ENCODE measurements at regions of chr6 and their contacts with region 1.

Region 1: DNA sequence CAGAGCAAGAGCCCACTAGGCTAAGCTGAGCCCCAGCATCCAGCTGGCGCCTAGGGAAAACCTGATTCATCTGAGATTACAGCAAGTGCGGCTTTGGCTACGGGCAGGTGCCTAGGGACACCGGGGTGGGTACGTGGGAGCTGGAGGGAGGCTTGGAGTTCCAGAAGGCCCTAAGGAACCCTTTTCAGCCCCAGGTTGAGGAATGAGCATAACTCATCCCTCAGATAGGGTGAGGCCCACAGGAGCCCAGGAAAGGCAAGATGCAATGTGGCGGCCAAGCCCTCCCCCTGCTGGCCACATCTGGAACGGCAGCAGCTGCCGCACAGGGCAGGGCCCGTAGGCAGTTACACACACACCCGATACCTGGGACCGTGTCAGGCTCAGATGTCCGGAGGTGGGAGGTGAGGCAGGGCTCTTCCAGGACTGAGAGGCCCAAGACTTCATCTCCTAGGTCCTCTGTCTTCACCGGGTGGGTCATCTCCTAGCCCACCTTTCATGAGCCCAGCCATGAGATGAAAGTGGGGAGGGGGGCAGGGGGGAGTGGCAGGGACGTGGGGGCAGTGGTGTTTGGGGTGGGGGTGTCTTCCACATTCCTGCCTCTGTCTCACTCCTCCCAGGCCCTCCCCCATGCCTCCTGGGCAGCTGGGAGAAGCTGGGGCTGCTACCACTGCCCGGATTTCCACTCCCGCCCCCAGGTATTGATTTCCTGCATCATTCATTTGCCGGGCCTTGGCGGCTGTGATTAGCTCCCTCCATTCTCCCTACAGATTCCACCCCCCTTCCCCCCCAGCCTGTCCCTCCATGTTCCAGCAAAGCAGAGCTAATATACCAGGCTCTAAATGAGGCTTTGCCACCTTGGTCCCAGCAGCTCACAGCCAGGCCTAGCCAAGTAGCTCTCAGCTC is 5.5 kb downstream of the MDGA1 start:
- DNase-seq: peak; percentile 90
- H3K4me3 ChIP-seq: no peak overlapping the region; a peak in 1 of 4 replicates
- H3K27ac ChIP-seq: peak overlapping the region in 1 of 2 experiments; percentile 20; a peak in 1 of 4 replicates
- H3K4me1 ChIP-seq: peaks cover 4 to 25% of the 10 kb centered on the region in 2 experiments; a peak in 3 of 4 replicates
- H3K27me3 ChIP-seq: no peaks in the 10 kb centered on the region
- CTCF ChIP-seq: peak; percentile 96
- EP300 ChIP-seq: no peak
- RAD21 ChIP-seq: peak; percentile 99

Region 2: DNA sequence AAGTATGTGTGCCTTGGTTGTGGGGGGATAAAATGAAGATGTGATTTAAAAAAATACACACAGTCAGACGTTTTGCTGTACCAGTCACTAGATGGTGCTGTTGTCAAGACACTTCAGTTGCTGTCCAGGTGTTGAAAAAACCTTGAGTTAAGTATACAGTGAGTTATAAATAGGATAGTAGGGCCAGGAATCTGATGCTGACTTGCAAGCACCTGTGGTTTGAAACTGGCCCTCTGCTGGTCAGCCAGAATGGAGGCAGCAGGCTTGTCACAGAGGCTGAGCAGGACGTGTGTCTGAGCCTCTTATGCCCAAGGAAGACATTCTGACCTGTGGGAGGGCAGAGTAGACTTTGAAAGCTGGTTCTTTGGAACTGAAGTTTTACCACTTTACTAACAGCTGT is 310.6 kb before region 1 on chr6:
- CTCF ChIA-PET with region 1: interaction called, 17 read pairs
- POLR2A ChIA-PET with region 1: no interaction called
- DNase-seq: peak; percentile 47
- H3K4me3 ChIP-seq: no peak overlapping the region; a peak in 1 of 4 replicates
- H3K27ac ChIP-seq: no peak overlapping the region
- H3K4me1 ChIP-seq: no peaks in the 10 kb centered on the region
- H3K27me3 ChIP-seq: no peaks in the 10 kb centered on the region
- CTCF ChIP-seq: peak; percentile 65
- EP300 ChIP-seq: no peak
- RAD21 ChIP-seq: peak; percentile 79

Region 3: GRCh38 chr6:37483917-37484785 is 208.0 kb before region 1 on chr6:
- CTCF ChIA-PET with region 1: interaction called, 88 read pairs
- POLR2A ChIA-PET with region 1: no interaction called
- DNase-seq: peak; percentile 92
- H3K4me3 ChIP-seq: no peak overlapping the region; a peak in 1 of 4 replicates
- H3K27ac ChIP-seq: peak overlapping the region in 1 of 2 experiments; percentile 43; a peak in 2 of 4 replicates
- H3K4me1 ChIP-seq: peaks cover 0 to 29% of the 10 kb centered on the region in 2 experiments; a peak in 1 of 4 replicates
- H3K27me3 ChIP-seq: no peaks in the 10 kb centered on the region
- CTCF ChIP-seq: peak; percentile 71
- EP300 ChIP-seq: no peak
- RAD21 ChIP-seq: peak; percentile 91

Region 4: GRCh38 chr6:37607944-37608343 is 84.2 kb before region 1 on chr6:
- CTCF ChIA-PET with region 1: interaction called, 18 read pairs
- POLR2A ChIA-PET with region 1: no interaction called
- DNase-seq: peak; percentile 46
- H3K4me3 ChIP-seq: no peak overlapping the region
- H3K27ac ChIP-seq: no peak overlapping the region
- H3K4me1 ChIP-seq: no peaks in the 10 kb centered on the region
- H3K27me3 ChIP-seq: no peaks in the 10 kb centered on the region; the same call in 1 of the 2 replicates
- CTCF ChIP-seq: peak; percentile 68
- EP300 ChIP-seq: no peak
- RAD21 ChIP-seq: peak; percentile 61

Region 5: DNA sequence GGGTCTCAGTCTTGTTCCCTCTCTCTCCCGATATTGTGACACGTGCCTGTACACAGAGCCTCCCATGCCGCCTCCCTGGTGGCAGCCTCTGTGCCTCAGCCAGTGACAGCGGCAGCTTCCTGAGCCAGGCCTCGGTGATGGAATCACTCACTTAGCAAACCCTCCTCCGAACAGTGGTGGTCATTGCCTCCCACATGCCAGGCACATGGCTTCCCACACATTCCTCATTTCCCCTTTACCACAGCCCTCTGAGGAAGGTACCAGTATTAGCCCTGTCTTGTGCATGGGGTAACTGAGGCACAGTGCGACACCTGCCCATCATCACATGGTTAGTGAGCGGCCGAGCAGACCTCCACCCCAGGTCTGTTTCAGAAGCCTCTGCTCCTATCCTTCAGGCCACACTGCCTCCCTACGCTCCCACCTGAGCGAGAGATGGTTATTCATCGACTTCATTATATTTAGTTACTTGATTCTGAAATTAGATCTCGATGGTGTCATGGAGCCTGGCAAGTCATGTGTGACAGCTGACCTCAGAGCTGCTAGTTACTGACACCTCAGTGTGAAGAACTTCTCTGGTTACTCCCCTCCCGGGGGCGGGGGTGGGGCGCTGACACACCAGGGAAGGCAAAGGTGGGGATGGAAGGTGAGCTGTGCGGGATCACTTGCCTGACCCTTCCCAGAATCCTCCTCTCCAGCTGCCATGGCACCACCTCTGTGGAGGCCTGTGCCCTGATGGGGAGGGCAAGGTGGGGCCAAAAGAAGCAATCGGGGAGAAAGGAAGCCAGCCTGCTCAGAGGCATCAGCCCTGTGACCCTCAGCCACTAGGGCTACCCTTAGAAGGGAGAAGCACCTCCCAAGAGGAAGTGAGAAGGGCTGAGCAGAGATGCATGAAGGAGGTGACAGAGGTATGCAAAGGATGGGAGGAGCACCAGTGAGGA is 12.3 kb before region 1 on chr6:
- CTCF ChIA-PET with region 1: interaction called, 35 read pairs
- POLR2A ChIA-PET with region 1: no interaction called
- DNase-seq: no peak
- H3K4me3 ChIP-seq: no peak overlapping the region
- H3K27ac ChIP-seq: no peak overlapping the region
- H3K4me1 ChIP-seq: no peaks in the 10 kb centered on the region; a peak in 1 of 4 replicates
- H3K27me3 ChIP-seq: no peaks in the 10 kb centered on the region
- CTCF ChIP-seq: no peak
- EP300 ChIP-seq: no peak
- RAD21 ChIP-seq: no peak

Region 6: GRCh38 chr6:38212579-38212978 is 520.4 kb after region 1 on chr6:
- CTCF ChIA-PET with region 1: no interaction called
- POLR2A ChIA-PET with region 1: no interaction called
- DNase-seq: no peak
- H3K4me3 ChIP-seq: no peak overlapping the region
- H3K27ac ChIP-seq: peak overlapping the region in 1 of 2 experiments; percentile 14; a peak in 2 of 4 replicates
- H3K4me1 ChIP-seq: peaks cover 9 to 53% of the 10 kb centered on the region in 2 experiments; a peak in 3 of 4 replicates
- H3K27me3 ChIP-seq: no peaks in the 10 kb centered on the region
- CTCF ChIP-seq: no peak
- EP300 ChIP-seq: no peak
- RAD21 ChIP-seq: no peak

Measured in SK-N-SH (cell line).